Lower leg skin (tissue), 4 donors: ENCODE measurements at regions of chr14 and their contacts with region 1.

Region 1: GRCh38 chr14:58166005-58166983 is 14.3 kb upstream of the ARMH4 start:
- DNase-seq: peak; percentile 79 to 97
- H3K4me3 ChIP-seq: no peak overlapping the region
- CTCF ChIP-seq: no peak
- POLR2A ChIP-seq: no peak

Region 2: DNA sequence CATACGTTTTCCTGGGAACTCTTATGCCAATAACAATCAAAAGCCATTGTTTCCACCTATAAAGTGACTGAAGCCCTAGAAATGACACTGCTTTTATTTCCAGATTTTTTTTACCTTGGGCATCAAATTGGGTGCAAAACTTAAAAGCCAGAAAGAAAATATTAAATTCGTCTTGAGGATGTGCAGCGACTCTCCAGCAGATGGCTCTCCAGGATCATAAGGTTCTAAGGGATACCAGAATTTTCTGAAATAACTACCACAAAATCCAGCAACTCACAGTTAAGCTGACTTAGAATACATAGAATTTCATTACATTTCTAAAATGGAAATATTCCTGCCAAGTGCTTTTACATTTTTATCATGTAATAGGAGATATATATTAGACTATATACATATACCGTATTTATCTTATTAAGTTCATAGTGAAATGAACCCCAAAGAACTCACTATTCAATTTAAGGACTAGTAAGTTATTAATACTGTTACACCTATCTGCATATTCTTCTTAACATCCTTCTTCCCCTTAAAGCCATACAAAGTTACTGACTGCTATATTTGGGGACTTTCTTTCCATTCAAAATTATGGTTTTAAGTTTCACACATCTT is 58.2 kb before region 1 on chr14:
- intact Hi-C with region 1: loop called (anchors 5 kb)
- DNase-seq: peak in 1 of 2 donors; percentile 22
- H3K4me3 ChIP-seq: no peak overlapping the region
- CTCF ChIP-seq: no peak
- POLR2A ChIP-seq: no peak